Caco-2 (cell line): ENCODE measurements at regions of chr3 and their contacts with region 1.

Region 1: GRCh38 chr3:124078953-124079911 is 87.3 kb upstream of the ROPN1 start:
- DNase-seq: peak in 1 of 2 experiments; percentile 52
- H3K4me3 ChIP-seq: no peak overlapping the region
- H3K4me3 Mint-ChIP-seq: no peak overlapping the region
- H3K27ac Mint-ChIP-seq: no peak overlapping the region
- H3K4me1 ChIP-seq: no peaks in the 10 kb centered on the region
- H3K4me1 Mint-ChIP-seq: no peaks in the 10 kb centered on the region
- H3K27me3 ChIP-seq: peaks cover 1% of the 10 kb centered on the region; the same call in 1 of the 2 replicates
- H3K27me3 Mint-ChIP-seq: peaks cover 11% of the 10 kb centered on the region
- CTCF ChIP-seq: peak; percentile 63 to 76

Region 2: DNA sequence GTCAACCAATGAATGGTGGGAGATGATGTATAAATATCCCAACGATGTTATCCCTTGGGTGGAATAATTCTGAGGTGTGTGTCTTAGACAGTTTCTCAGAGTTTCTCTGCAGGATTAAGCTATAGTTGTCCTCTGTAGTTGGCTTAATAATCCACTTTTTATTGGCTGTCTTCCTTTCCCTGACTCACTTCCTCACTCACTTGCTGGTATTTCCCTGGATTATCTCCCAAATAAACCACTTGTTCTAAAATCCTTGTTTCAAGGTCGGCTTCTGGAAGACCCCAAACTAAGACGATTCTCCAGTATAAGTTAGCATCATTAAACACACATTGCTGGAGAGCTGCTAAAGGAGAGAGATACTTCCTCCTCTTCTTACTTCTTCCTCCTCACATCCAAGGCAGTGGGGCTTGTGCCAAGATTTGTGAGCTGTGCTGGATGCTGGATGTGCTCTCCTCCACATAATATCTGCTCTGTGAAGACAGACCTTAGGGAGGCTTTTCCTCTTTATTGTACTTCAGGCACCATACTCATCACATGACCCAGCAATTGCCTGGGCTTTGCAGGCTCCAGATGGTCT is 64.8 kb before region 1 on chr3:
- CTCF ChIA-PET with region 1: interaction called, 7 read pairs
- POLR2A ChIA-PET with region 1: no interaction called
- intact Hi-C with region 1: loop called (anchors 1 kb)
- DNase-seq: no peak
- H3K4me3 ChIP-seq: no peak overlapping the region
- H3K4me3 Mint-ChIP-seq: no peak overlapping the region
- H3K27ac Mint-ChIP-seq: no peak overlapping the region
- H3K4me1 ChIP-seq: no peaks in the 10 kb centered on the region
- H3K4me1 Mint-ChIP-seq: peaks cover 6% of the 10 kb centered on the region
- H3K27me3 ChIP-seq: no peaks in the 10 kb centered on the region
- H3K27me3 Mint-ChIP-seq: peaks cover 19% of the 10 kb centered on the region
- CTCF ChIP-seq: no peak

Region 3: GRCh38 chr3:124057420-124057819 is 21.8 kb before region 1 on chr3:
- CTCF ChIA-PET with region 1: no interaction called
- POLR2A ChIA-PET with region 1: no interaction called
- intact Hi-C with region 1: no loop called
- DNase-seq: no peak
- H3K4me3 ChIP-seq: no peak overlapping the region
- H3K4me3 Mint-ChIP-seq: no peak overlapping the region
- H3K27ac Mint-ChIP-seq: no peak overlapping the region
- H3K4me1 ChIP-seq: peaks cover 19% of the 10 kb centered on the region
- H3K4me1 Mint-ChIP-seq: peaks cover 14% of the 10 kb centered on the region
- H3K27me3 ChIP-seq: no peaks in the 10 kb centered on the region
- H3K27me3 Mint-ChIP-seq: peaks cover 3% of the 10 kb centered on the region
- CTCF ChIP-seq: no peak

Region 4: DNA sequence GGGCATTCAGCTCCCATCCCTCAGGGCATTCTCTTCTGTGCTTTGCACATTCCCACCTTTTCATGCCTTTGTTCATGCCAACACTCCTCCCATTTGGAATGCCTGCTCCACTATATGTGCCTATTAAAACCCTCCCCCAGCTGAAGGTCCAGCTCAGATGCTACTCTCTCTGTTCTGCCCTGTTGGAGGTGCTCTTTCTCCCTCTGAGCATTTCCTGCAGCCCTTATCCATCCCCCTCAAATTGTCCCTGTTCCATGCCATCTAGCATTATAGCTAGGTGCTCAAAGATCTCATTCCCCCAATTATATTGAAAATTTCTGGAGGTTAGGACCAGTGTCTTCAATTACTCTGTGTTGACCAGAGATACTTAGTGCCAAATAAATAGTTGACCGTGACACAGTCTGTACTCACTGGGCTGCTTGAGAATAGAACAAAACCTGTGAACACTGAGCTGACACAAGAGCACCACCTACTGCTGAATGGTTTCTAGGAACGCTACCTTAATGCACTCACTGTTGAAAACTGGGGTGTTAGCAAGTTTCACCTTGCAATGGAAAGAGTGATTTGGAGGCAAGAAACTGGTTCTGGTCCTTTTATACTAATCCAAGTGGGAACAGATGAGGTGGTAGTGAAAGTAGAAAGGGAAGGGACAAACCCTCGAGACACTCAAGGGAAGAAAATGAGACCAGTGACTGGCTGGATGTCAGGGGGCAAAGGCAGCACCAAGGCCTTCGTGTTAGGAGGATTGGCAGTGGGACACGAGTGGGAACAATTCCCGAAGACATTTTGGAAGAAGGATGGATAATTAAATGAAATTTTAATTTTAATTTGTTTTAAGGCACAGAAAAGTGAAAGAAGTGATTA is 202.5 kb after region 1 on chr3:
- CTCF ChIA-PET with region 1: no interaction called
- POLR2A ChIA-PET with region 1: no interaction called
- intact Hi-C with region 1: loop called (anchors 5 kb)
- DNase-seq: peak in 1 of 2 experiments; percentile 18
- H3K4me3 ChIP-seq: no peak overlapping the region
- H3K4me3 Mint-ChIP-seq: no peak overlapping the region
- H3K27ac Mint-ChIP-seq: no peak overlapping the region
- H3K4me1 ChIP-seq: no peaks in the 10 kb centered on the region
- H3K4me1 Mint-ChIP-seq: no peaks in the 10 kb centered on the region
- H3K27me3 ChIP-seq: no peaks in the 10 kb centered on the region
- H3K27me3 Mint-ChIP-seq: peaks cover 14% of the 10 kb centered on the region
- CTCF ChIP-seq: peak; percentile 34 to 40

Region 5: DNA sequence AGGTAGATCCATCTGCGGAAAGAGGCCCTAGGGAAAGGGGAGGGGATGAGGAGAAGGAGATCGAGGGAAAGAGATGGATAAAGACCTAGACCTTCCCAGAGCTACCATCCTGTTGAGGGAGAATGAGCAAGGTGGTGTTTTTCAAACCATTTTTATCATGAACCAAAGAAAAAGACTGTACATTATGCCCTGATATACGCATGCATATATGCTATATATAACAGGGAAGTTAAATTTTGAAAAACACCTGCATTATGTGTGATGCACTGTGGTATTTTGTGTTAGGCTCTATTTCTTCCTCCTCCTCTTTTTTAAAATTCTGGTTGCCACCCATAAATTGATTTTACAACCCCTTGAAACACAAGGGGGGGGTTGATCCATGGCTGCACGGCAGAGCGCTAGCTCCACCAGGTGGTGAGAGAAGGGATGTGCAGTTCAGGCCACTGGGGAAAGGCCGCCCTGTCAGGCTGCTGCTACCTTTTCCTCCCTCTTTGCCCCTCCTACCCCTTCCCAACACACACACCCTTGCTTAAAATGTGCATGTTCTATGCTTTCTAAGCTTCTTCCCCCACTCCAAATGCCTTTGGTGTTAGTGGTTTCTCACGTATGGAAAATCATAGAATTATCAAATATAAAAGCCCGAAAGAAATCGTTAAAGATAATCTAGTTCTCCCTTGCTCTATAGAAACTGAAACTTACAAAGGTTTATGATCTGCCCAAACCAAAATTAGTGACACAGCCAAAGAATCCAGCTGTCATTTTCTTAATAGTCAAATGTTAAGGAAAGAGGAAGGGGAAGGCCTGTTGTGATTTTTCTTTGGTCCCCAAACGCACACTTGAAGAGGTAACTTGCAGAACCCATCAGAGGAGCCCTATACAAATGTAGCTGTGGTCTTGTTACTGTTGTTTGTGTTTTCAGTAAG is 389.0 kb after region 1 on chr3:
- CTCF ChIA-PET with region 1: no interaction called
- POLR2A ChIA-PET with region 1: no interaction called
- intact Hi-C with region 1: loop called (anchors 2 kb)
- DNase-seq: peak; percentile 55 to 76
- H3K4me3 ChIP-seq: no peak overlapping the region
- H3K4me3 Mint-ChIP-seq: no peak overlapping the region
- H3K27ac Mint-ChIP-seq: no peak overlapping the region
- H3K4me1 ChIP-seq: peaks cover 7% of the 10 kb centered on the region; the same call in 1 of the 2 replicates
- H3K4me1 Mint-ChIP-seq: peaks cover 7% of the 10 kb centered on the region
- H3K27me3 ChIP-seq: no peaks in the 10 kb centered on the region
- H3K27me3 Mint-ChIP-seq: peaks cover 4% of the 10 kb centered on the region
- CTCF ChIP-seq: peak; percentile 97 to 98